K562 (cell line): ENCODE measurements at regions of chr4 and their contacts with region 1.

Region 1: GRCh38 chr4:5979976-5980375 is 38.3 kb downstream of the C4orf50 start:
- DNase-seq: peak in 2 of 4 experiments; percentile 12 to 22
- ATAC-seq: peak; percentile 61; the same call in 2 of the 3 replicates
- H3K4me3 ChIP-seq: no peak overlapping the region
- H3K27ac ChIP-seq: no peak overlapping the region
- H3K4me1 ChIP-seq: 0 out of 5 replicates have a peak, but pooled peaks cover 0 to 2% of the 10 kb centered on the region in 2 experiments
- H3K27me3 ChIP-seq: peaks cover 0 to 5% of the 10 kb centered on the region in 2 experiments; a peak in 1 of 5 replicates
- CTCF ChIP-seq: peak; percentile 42 to 63 (median 46); a peak in 5 of 6 replicates
- EP300 ChIP-seq: no peak
- POLR2A ChIP-seq: no peak
- RAD21 ChIP-seq: peak; percentile 49 to 60

Region 2: DNA sequence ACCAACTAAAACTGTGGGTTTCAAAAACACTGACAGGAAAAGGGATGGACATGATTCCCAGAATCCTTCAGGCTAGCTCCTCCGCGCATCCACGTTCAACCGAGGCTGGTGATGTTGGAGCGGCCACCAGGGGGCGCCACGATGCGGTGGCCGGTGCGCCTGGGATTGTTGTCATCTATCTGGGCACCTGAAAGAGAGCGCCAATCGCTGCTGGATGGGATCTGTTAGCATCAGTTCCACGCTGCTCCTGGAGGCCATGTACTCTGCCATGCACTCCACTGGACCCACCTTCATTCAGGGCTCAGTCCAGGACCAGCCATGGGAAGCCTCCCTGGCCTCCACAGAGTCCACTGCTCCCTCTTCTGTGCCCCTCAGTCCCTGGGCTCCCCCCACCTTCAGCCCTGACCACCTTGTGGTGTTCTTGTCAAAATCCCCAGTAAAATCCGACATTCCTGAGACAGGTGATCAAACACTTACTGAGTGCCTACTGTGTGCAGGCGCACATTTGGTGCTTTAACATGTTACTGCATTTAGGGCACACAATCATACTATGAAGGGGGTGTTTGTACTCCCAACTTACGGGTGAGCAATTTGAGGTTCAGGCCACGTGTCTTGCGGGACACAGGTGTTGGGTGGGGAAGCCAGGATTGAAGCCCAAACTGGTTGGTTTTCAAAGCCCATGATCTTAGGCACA is 158.2 kb before region 1 on chr4:
- CTCF ChIA-PET with region 1: no interaction called
- POLR2A ChIA-PET with region 1: no interaction called
- in situ Hi-C with region 1: no loop called
- intact Hi-C with region 1: loop called (anchors 1 kb)
- DNase-seq: peak; percentile 57 to 66 (median 62)
- ATAC-seq: peak; percentile 89
- H3K4me3 ChIP-seq: no peak overlapping the region
- H3K27ac ChIP-seq: no peak overlapping the region
- H3K4me1 ChIP-seq: no peaks in the 10 kb centered on the region
- H3K27me3 ChIP-seq: no peaks in the 10 kb centered on the region
- CTCF ChIP-seq: peak; percentile 71 to 87 (median 72)
- EP300 ChIP-seq: no peak
- POLR2A ChIP-seq: no peak
- RAD21 ChIP-seq: peak; percentile 11 to 53; a peak in 2 of 4 replicates

Region 3: GRCh38 chr4:6969826-6970800 is 990.1 kb after region 1 on chr4:
- CTCF ChIA-PET with region 1: no interaction called
- POLR2A ChIA-PET with region 1: no interaction called
- in situ Hi-C with region 1: no loop called
- intact Hi-C with region 1: no loop called
- DNase-seq: no peak
- ATAC-seq: no peak
- H3K4me3 ChIP-seq: no peak overlapping the region
- H3K27ac ChIP-seq: no peak overlapping the region
- H3K4me1 ChIP-seq: peaks cover 3 to 14% of the 10 kb centered on the region in 2 experiments
- H3K27me3 ChIP-seq: no peaks in the 10 kb centered on the region
- CTCF ChIP-seq: no peak
- EP300 ChIP-seq: no peak
- POLR2A ChIP-seq: no peak
- RAD21 ChIP-seq: no peak